ENCODE measurements at regions of chr9 and their contacts with region 1.

Region 1: GRCh38 chr9:32384364-32385151 is at the start of gene ACO1:
- DNase-seq: peak; percentile 91 to 94
- ATAC-seq: peak; percentile 98 to 99 (median 98)
- H3K4me3 ChIP-seq: peak within 1 kb of the TSS; percentile 57 to 99 (median 82)
- H3K27ac ChIP-seq: peak within 1 kb of the TSS; percentile 14 to 95 (median 87)
- H3K4me1 ChIP-seq: peaks cover 0 to 41% (median 24%) of the 10 kb centered on the region in 9 donors
- H3K27me3 ChIP-seq: peaks cover 0 to 13% (median 0%) of the 10 kb centered on the region in 7 donors
- CTCF ChIP-seq: peak in 2 of 9 donors; percentile 40 to 42
- total RNA-seq, gene ACO1: 55.2 to 77.6 (median 66.3) TPM

Region 2: GRCh38 chr9:32426278-32426939 is 41.9 kb after region 1 on chr9:
- intact Hi-C with region 1: loop called (anchors 2 to 5 kb)
- DNase-seq: no peak
- ATAC-seq: peak in 4 of 8 donors; percentile 26 to 64 (median 50)
- H3K4me3 ChIP-seq: no peak overlapping the region
- H3K27ac ChIP-seq: no peak overlapping the region
- H3K4me1 ChIP-seq: peaks cover 0 to 13% (median 0%) of the 10 kb centered on the region in 9 donors
- H3K27me3 ChIP-seq: no peaks in the 10 kb centered on the region
- CTCF ChIP-seq: no peak

Region 3: GRCh38 chr9:32526041-32526706 is 141.6 kb after region 1 on chr9 and contains the start of gene RIGI:
- intact Hi-C with region 1: loop called in 5 of 10 experiments (anchors 1 to 10 kb)
- DNase-seq: peak; percentile 91 to 96
- ATAC-seq: peak; percentile 94 to 97 (median 96)
- H3K4me3 ChIP-seq: peak within 1 kb of the TSS; percentile 39 to 91 (median 68)
- H3K27ac ChIP-seq: peak within 1 kb of the TSS; percentile 41 to 92 (median 84)
- H3K4me1 ChIP-seq: peaks cover 4 to 41% (median 33%) of the 10 kb centered on the region in 9 donors
- H3K27me3 ChIP-seq: no peaks in the 10 kb centered on the region
- CTCF ChIP-seq: peak in 8 of 9 donors; percentile 39 to 72 (median 54)
- total RNA-seq, gene RIGI: 3.0 to 15.2 (median 5.0) TPM

Region 4: GRCh38 chr9:32579706-32580331 is 195.3 kb after region 1 on chr9:
- intact Hi-C with region 1: loop called in 7 of 10 experiments (anchors 1 to 5 kb)
- DNase-seq: peak; percentile 60 to 67
- ATAC-seq: peak in 1 of 8 donors; percentile 57
- H3K4me3 ChIP-seq: peak overlapping the region in 1 of 10 donors; percentile 11
- H3K27ac ChIP-seq: no peak overlapping the region
- H3K4me1 ChIP-seq: peaks cover 0 to 4% (median 0%) of the 10 kb centered on the region in 9 donors
- H3K27me3 ChIP-seq: peaks cover 0 to 28% (median 3%) of the 10 kb centered on the region in 7 donors
- CTCF ChIP-seq: peak; percentile 87 to 97 (median 92)

Region 5: DNA sequence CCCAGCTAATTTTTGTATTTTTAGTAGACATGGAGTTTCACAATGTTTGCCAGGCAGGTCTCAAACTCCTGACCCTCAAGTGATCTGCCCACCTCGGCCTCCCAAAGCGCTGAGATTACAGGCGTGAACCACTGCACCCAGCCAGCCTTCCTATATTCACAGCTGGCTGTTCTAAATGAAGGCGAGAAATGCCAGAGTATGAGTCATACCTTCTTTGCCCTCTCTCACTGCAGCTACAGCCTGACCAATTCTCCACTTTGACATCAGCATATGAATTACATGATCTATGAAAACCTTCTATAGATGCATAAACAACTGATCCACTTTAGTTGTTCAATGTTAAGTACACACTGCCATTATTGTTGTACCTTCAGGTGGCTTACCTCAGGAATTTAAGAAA is 602.4 kb after region 1 on chr9:
- intact Hi-C with region 1: loop called in 1 of 10 experiments (anchors 5 kb)
- DNase-seq: no peak
- ATAC-seq: no peak
- H3K4me3 ChIP-seq: no peak overlapping the region
- H3K27ac ChIP-seq: no peak overlapping the region
- H3K4me1 ChIP-seq: peaks cover 0 to 4% (median 1%) of the 10 kb centered on the region in 9 donors
- H3K27me3 ChIP-seq: no peaks in the 10 kb centered on the region
- CTCF ChIP-seq: no peak